ENCODE measurements at regions of chr5 and their contacts with region 1.

Region 1: DNA sequence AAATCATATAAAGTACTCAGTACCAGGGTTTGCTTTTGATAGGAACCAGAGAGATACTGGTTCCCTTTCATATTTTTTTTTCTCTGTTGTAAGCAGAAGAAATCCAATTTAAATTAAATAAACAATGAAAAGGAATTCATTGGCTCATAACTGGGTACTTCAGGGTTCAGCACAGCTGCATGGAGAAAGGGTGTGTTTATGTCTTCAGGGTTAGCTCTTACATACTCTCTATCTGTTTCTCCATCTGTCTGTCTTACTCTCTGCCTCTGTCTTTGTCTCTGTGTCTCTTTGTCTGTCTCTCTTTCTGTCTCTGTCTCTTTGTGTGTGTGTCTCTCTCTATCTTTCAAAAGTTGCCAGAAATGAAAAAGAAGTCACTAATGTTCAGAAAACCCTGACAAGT is 345.9 kb downstream of the MSX2 start:
- DNase-seq: no peak
- H3K4me3 ChIP-seq: no peak overlapping the region
- H3K27ac ChIP-seq: no peak overlapping the region
- H3K4me1 ChIP-seq: no peaks in the 10 kb centered on the region
- H3K27me3 ChIP-seq: no peaks in the 10 kb centered on the region
- CTCF ChIP-seq: no peak
- POLR2A ChIP-seq: no peak

Region 2: GRCh38 chr5:173714551-173715428 is 1355.5 kb before region 1 on chr5:
- intact Hi-C with region 1: no loop called
- DNase-seq: no peak
- H3K4me3 ChIP-seq: no peak overlapping the region
- H3K27ac ChIP-seq: no peak overlapping the region
- H3K4me1 ChIP-seq: no peaks in the 10 kb centered on the region
- H3K27me3 ChIP-seq: no peaks in the 10 kb centered on the region
- CTCF ChIP-seq: no peak
- POLR2A ChIP-seq: no peak

Region 3: DNA sequence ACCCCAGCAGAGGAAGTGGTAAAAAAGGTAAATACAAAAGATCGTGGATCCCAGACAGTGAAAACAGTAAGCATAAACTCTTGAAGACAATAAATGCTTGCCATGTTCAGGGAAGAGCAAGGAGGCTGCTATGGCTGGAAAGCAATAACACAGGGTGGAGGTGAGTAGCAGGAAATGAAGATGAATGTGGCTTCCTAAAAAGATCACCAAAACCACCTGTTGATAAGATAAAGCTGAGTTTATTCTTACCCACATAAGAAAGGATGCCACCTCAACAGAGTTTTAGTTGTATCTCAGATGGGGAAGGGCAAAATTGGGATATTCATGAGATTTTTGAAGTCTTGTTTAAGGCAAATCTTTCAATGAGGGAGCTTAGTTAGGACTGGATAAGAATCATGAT is 72.6 kb before region 1 on chr5:
- intact Hi-C with region 1: loop called (anchors 2 kb)
- DNase-seq: no peak
- H3K4me3 ChIP-seq: no peak overlapping the region
- H3K27ac ChIP-seq: no peak overlapping the region
- H3K4me1 ChIP-seq: no peaks in the 10 kb centered on the region
- H3K27me3 ChIP-seq: no peaks in the 10 kb centered on the region
- CTCF ChIP-seq: no peak
- POLR2A ChIP-seq: no peak

Measured in breast epithelium (tissue), 4 donors.